ENCODE measurements at regions of chr17 and their contacts with region 1.

Region 1: DNA sequence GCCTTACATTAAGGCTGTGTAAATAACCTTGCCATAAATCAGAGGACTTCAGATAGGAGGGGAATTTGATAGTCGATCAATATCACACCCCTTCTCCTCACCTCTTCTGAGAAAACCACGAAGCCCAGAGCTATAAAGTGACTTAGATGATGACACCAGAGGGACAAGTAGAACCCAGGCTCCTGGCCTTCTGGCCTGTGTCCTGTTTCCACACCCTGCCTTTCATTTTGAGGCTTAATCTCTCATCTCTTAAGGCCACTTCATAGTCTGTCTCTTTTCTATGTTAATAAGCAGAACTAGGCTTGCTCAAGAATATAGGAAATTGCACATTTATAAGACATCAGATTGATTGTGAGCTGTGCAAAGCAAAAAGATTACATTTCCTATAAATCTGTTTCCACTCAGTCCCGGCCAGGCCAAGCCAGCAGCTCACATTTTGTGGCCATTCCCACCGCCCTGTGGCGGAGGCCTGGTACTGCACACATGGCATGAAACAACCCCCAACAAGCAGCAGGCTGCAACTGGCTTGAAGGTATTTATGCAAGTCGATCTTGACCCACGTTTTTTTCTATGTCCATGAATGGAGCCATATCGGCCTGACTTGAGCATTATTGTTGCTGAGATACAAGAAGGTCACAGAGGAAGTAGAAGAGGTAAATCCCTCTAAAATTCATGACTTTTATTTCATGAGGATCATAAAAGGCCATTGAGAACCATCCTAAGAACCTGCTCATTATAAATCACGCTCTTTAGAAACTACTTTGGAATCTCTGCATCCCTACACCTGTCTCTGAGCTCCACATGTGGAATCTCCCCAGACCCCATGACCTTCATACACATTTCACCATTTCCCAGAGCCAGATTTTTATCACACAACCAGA is 93.7 kb downstream of the PMP22 start:
- ATAC-seq: peak; percentile 98 to 100 (median 99)
- H3K4me3 ChIP-seq: no peak overlapping the region
- H3K27ac ChIP-seq: no peak overlapping the region
- H3K4me1 ChIP-seq: peaks cover 9 to 10% of the 10 kb centered on the region in 2 donors

Region 2: GRCh38 chr17:13337864-13338371 is 1833.5 kb before region 1 on chr17:
- in situ Hi-C with region 1: loop called in 1 of 9 experiments (anchors 25 kb)
- ATAC-seq: peak; percentile 32 to 83 (median 54)
- H3K4me3 ChIP-seq: peak overlapping the region in 4 of 5 donors; percentile 18 to 31 (median 22)
- H3K27ac ChIP-seq: no peak overlapping the region
- H3K4me1 ChIP-seq: peaks cover 0 to 2% of the 10 kb centered on the region in 2 donors

Region 3: DNA sequence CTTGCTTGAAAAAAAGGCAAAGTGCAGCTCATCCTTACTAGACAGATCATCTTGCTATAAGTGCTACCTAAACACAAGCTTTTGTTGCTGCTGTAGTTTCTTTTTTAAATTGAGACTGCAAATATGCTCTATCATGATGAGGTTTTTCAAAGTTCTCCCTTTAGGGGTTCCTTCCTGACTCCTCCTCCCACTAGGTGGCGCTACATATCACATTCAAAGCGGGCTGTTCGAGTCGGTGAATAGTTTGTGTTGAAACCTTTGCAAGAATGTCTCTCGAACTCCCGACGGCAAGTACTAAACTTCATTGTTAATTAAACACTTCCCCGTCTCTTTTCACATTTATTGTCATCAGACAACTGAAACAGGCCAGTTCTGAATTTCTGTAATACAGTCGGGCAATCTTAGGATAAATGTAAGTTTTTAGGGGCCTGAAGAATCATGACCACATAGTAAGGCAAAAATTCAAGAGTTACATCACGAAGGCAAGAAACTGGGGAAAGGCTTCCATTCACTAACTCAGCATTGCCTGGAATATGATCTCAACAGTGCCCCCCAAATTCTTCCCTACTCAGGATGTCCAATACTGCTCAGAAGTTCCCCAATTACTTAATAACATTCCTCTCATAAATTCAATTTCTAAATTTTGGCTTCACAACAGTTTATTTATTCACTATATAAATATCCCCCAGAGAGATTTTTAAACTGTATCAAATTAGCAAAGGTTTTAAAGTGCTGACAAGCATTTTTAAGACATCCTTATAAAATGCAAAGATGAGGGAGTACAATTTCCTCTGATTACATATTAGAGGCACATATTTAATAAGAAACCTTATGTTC is 1576.4 kb before region 1 on chr17:
- in situ Hi-C with region 1: loop called in 2 of 9 experiments (anchors 25 kb)
- ATAC-seq: peak; percentile 65 to 92 (median 72)
- H3K4me3 ChIP-seq: no peak overlapping the region
- H3K27ac ChIP-seq: no peak overlapping the region
- H3K4me1 ChIP-seq: peaks cover 4 to 17% of the 10 kb centered on the region in 2 donors

Region 4: DNA sequence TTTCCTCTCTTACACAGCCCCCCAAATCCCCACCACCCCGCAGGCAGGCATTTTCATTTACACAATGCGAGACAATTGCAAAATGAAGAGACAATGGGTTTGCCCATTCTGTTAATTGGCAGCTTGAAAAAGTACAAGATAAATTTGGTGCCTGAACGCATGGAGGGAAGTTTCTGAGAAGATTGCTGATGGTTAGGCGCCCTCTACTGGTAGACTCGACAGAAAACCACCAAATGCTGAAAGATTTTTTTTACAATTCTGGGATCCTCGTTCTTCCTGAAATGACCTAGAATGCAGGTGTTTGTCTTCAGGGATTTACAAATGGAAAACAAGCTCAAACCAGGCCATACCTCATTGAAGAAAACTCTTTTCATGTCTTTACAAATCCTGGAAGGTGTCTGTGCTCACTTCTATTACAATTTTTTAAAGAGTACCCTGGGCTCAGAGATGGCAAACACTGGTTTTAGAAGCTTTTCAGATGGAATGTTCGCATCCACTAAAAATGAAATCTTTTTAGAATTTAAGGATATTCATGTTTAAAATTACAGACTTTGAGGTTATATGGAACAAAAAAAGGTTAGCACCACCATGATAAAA is 244.8 kb before region 1 on chr17:
- in situ Hi-C with region 1: loop called in 1 of 9 experiments (anchors 25 kb)
- ATAC-seq: peak in 2 of 8 experiments; percentile 40 to 49
- H3K4me3 ChIP-seq: no peak overlapping the region
- H3K27ac ChIP-seq: no peak overlapping the region
- H3K4me1 ChIP-seq: peaks cover 4 to 6% of the 10 kb centered on the region in 2 donors

Region 5: GRCh38 chr17:14950216-14950615 is 221.2 kb before region 1 on chr17:
- in situ Hi-C with region 1: loop called in 2 of 9 experiments (anchors 25 kb)
- ATAC-seq: no peak
- H3K4me3 ChIP-seq: no peak overlapping the region
- H3K27ac ChIP-seq: no peak overlapping the region
- H3K4me1 ChIP-seq: no peaks in the 10 kb centered on the region

Region 6: GRCh38 chr17:15414532-15415306 is 243.3 kb after region 1 on chr17:
- in situ Hi-C with region 1: no loop called
- ATAC-seq: no peak
- H3K4me3 ChIP-seq: no peak overlapping the region
- H3K27ac ChIP-seq: no peak overlapping the region
- H3K4me1 ChIP-seq: no peaks in the 10 kb centered on the region

Measured in motor neuron (in vitro differentiated cells).